ENCODE measurements at regions of chr9 and their contacts with region 1.

Region 1: GRCh38 chr9:131178382-131178781 is 53.0 kb downstream of the NUP214 start:
- DNase-seq: peak; percentile 59 to 82 (median 62)
- H3K4me3 ChIP-seq: no peak overlapping the region
- H3K4me3 Mint-ChIP-seq: no peak overlapping the region
- H3K27ac ChIP-seq: no peak overlapping the region
- H3K27ac Mint-ChIP-seq: peak overlapping the region in 6 of 8 donors; percentile 9 to 84 (median 74)
- H3K4me1 ChIP-seq: peaks cover 4% of the 10 kb centered on the region
- H3K4me1 Mint-ChIP-seq: peaks cover 8 to 20% (median 12%) of the 10 kb centered on the region in 3 donors
- H3K27me3 ChIP-seq: no peaks in the 10 kb centered on the region
- H3K27me3 Mint-ChIP-seq: no peaks in the 10 kb centered on the region

Region 2: DNA sequence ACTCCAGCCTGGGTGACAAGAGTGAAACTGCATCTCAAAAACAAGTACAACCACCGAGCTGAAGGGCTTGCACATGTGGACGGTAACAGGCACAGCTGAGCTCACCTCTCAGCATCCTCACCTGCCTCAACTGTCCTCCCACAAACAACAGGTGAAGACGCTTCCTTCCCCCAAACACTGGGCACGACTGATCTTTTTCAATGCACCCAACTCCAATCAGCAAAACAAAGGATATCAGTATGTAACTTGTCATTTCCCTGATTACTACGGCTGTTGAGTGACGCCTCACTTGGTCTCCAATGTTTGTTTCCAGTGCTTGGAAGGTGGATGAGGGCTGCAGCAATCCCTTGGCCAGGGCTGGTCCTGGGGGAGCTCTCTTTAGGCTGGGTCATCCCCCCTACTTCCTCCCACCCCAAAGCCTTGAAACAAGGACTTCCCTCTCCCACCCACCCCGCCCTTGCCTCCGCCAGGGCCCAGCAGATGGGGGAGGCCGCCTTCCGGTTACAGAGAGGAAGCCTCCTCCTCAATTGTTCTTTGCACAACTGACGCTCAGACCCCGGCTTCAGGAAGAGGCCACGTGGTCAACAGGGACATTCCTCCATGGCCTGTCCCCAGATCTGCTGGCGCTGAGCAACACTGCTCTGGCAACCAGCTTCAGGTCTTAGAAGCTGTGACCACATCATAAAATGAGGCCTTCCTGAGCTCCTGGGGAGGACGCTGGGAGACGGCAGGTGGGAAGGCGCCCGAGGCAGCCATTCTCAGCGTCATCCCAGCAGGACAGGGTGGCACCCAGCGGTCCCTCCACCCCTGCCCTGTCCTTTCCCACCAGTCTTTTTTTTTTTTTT is 92.0 kb after region 1 on chr9:
- CTCF ChIA-PET with region 1: interaction called, 10 read pairs
- POLR2A ChIA-PET with region 1: no interaction called
- DNase-seq: peak in 4 of 5 donors; percentile 29 to 70 (median 57)
- H3K4me3 ChIP-seq: peak overlapping the region; percentile 70
- H3K4me3 Mint-ChIP-seq: peak overlapping the region; percentile 90 to 100 (median 96)
- H3K27ac ChIP-seq: peak overlapping the region; percentile 94
- H3K27ac Mint-ChIP-seq: peak overlapping the region; percentile 93 to 99 (median 97)
- H3K4me1 ChIP-seq: peaks cover 56% of the 10 kb centered on the region
- H3K4me1 Mint-ChIP-seq: peaks cover 55 to 73% (median 63%) of the 10 kb centered on the region in 3 donors
- H3K27me3 ChIP-seq: no peaks in the 10 kb centered on the region
- H3K27me3 Mint-ChIP-seq: peaks cover 0 to 3% of the 10 kb centered on the region in 2 donors

Region 3: GRCh38 chr9:131432597-131433306 is 254.4 kb after region 1 on chr9:
- CTCF ChIA-PET with region 1: no interaction called
- POLR2A ChIA-PET with region 1: no interaction called
- DNase-seq: no peak
- H3K4me3 ChIP-seq: no peak overlapping the region
- H3K4me3 Mint-ChIP-seq: peak overlapping the region in 1 of 7 donors; percentile 2
- H3K27ac ChIP-seq: no peak overlapping the region
- H3K27ac Mint-ChIP-seq: peak overlapping the region in 2 of 8 donors; percentile 48 to 75
- H3K4me1 ChIP-seq: peaks cover 21% of the 10 kb centered on the region
- H3K4me1 Mint-ChIP-seq: peaks cover 16 to 43% (median 36%) of the 10 kb centered on the region in 3 donors
- H3K27me3 ChIP-seq: no peaks in the 10 kb centered on the region
- H3K27me3 Mint-ChIP-seq: no peaks in the 10 kb centered on the region